Naive thymus-derived CD4-positive, alpha-beta T cell (primary cell): ENCODE measurements at regions of chr7 and their contacts with region 1.

Region 1: DNA sequence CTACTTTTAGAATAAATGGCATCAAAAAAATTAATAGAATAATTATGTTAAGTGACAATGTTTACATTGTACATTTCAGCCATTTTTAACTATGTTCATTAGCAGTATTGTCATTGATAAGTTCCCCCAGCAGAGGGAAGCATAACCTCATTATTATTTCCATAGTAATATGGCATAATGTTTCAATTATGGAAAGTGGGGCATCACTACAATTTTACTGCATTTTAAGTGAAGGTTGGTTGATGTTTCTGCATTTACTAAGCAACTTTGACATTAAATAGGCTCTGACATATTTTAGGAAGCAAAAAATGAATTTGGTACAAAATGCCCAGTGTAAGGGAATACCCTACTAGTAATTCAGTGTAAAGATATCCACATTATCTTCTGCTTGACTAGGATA is 218.3 kb downstream of the SEMA3A start:
- DNase-seq: peak in 7 of 9 donors; percentile 10 to 67 (median 56)
- ATAC-seq: peak; percentile 69
- H3K4me3 ChIP-seq: no peak overlapping the region
- H3K4me3 Mint-ChIP-seq: no peak overlapping the region
- H3K27ac ChIP-seq: no peak overlapping the region
- H3K27ac Mint-ChIP-seq: no peak overlapping the region
- H3K4me1 ChIP-seq: no peaks in the 10 kb centered on the region
- H3K4me1 Mint-ChIP-seq: peaks cover 0 to 1% (median 0%) of the 10 kb centered on the region in 7 donors
- H3K27me3 ChIP-seq: no peaks in the 10 kb centered on the region
- H3K27me3 Mint-ChIP-seq: no peaks in the 10 kb centered on the region

Region 2: DNA sequence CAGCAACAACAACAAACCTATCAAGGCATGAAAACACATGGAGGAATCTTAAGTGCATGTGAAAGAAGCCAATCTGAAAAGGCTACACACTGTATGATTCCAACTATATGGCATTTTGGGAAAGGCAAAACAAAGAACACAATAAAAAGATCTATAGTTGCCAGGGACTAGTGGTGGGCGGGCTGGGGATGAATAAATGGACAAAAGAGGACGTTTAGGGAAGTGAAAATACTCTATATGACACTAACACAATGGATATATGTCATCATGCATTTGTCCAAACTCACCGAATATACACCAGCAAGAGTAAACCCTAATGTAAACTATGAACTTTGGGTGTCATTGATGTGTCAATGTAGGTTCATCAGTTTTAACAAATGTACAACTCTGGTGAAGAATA is 416.4 kb before region 1 on chr7:
- CTCF ChIA-PET with region 1: no interaction called
- POLR2A ChIA-PET with region 1: no interaction called
- intact Hi-C with region 1: no loop called
- DNase-seq: no peak
- ATAC-seq: no peak
- H3K4me3 ChIP-seq: no peak overlapping the region
- H3K4me3 Mint-ChIP-seq: no peak overlapping the region
- H3K27ac ChIP-seq: no peak overlapping the region
- H3K27ac Mint-ChIP-seq: no peak overlapping the region
- H3K4me1 ChIP-seq: no peaks in the 10 kb centered on the region
- H3K4me1 Mint-ChIP-seq: peaks cover 0 to 1% (median 0%) of the 10 kb centered on the region in 7 donors
- H3K27me3 ChIP-seq: no peaks in the 10 kb centered on the region
- H3K27me3 Mint-ChIP-seq: no peaks in the 10 kb centered on the region

Region 3: GRCh38 chr7:84455788-84456187 is 479.5 kb after region 1 on chr7:
- CTCF ChIA-PET with region 1: interaction called, 6 read pairs
- POLR2A ChIA-PET with region 1: no interaction called
- intact Hi-C with region 1: loop called (anchors 1 to 5 kb)
- DNase-seq: no peak
- ATAC-seq: no peak
- H3K4me3 ChIP-seq: no peak overlapping the region
- H3K4me3 Mint-ChIP-seq: no peak overlapping the region
- H3K27ac ChIP-seq: no peak overlapping the region
- H3K27ac Mint-ChIP-seq: no peak overlapping the region
- H3K4me1 ChIP-seq: no peaks in the 10 kb centered on the region
- H3K4me1 Mint-ChIP-seq: no peaks in the 10 kb centered on the region
- H3K27me3 ChIP-seq: no peaks in the 10 kb centered on the region
- H3K27me3 Mint-ChIP-seq: no peaks in the 10 kb centered on the region

Region 4: DNA sequence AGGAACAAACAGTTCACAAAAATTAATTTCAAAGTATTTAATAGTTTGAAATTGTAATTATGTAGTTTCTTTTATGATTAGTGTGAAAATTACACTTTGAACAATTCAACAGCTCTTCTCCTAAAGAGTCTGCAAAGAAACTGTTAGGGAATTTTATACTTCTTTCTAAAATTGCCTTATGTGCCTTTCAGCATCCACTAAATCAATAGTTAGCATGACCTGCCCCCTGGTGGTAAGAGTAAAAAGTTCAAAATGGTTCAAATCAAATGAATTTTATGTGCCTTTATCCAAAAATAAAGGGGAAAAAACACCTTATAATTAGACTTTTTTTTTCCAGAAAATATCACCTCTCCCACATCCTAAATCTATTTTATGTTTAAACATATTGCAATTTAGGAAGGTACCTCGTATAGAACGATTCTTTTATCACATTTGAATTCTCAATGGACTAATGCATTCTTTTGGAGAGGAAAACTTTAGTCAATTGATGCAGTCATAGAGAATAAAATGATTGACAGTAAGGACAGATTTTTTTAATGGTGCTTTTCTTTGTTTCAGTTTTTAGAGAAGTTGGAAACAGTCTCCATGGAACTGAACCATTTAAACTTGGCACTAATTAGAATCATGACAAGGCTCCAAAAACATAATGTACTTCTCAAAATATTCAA is 1046.9 kb after region 1 on chr7:
- CTCF ChIA-PET with region 1: interaction called, 5 read pairs
- POLR2A ChIA-PET with region 1: no interaction called
- intact Hi-C with region 1: loop called (anchors 1 kb)
- DNase-seq: peak in 7 of 9 donors; percentile 12 to 60 (median 45)
- ATAC-seq: no peak
- H3K4me3 ChIP-seq: no peak overlapping the region
- H3K4me3 Mint-ChIP-seq: no peak overlapping the region
- H3K27ac ChIP-seq: no peak overlapping the region
- H3K27ac Mint-ChIP-seq: no peak overlapping the region
- H3K4me1 ChIP-seq: no peaks in the 10 kb centered on the region
- H3K4me1 Mint-ChIP-seq: no peaks in the 10 kb centered on the region
- H3K27me3 ChIP-seq: no peaks in the 10 kb centered on the region
- H3K27me3 Mint-ChIP-seq: peaks cover 0 to 8% (median 4%) of the 10 kb centered on the region in 5 donors